ENCODE measurements at regions of chr20 and their contacts with region 1.

Region 1: GRCh38 chr20:22617160-22617559 is 32.8 kb upstream of the FOXA2 start:
- DNase-seq: no peak
- H3K4me3 ChIP-seq: no peak overlapping the region
- H3K27ac ChIP-seq: no peak overlapping the region
- H3K4me1 ChIP-seq: no peaks in the 10 kb centered on the region
- H3K27me3 ChIP-seq: peaks cover 0 to 34% (median 0%) of the 10 kb centered on the region in 4 donors
- CTCF ChIP-seq: no peak
- POLR2A ChIP-seq: no peak

Region 2: DNA sequence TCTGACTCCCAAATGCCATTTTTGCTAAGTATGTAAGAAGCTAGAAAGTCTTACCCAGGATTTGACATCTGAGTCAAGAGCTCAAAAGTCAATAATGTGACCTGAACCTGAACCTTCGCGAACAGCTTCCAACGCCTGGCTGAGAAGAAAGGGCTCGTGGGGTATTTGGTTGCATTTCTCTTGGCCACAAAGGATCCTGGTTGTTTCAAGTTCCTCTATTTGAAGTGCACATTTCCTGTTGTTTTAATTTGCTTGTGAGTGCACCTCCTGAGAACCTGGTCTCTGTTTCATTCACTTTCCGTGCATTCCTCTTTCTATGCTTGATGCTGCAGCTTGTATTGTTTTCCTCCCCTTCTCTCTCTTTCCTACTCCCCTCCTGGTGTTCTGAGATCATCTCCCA is 245.3 kb before region 1 on chr20:
- intact Hi-C with region 1: loop called (anchors 10 kb)
- DNase-seq: no peak
- H3K4me3 ChIP-seq: no peak overlapping the region
- H3K27ac ChIP-seq: no peak overlapping the region
- H3K4me1 ChIP-seq: no peaks in the 10 kb centered on the region
- H3K27me3 ChIP-seq: peaks cover 0 to 61% (median 0%) of the 10 kb centered on the region in 4 donors
- CTCF ChIP-seq: no peak
- POLR2A ChIP-seq: no peak

Region 3: GRCh38 chr20:22453239-22454080 is 163.7 kb before region 1 on chr20:
- intact Hi-C with region 1: no loop called
- DNase-seq: no peak
- H3K4me3 ChIP-seq: no peak overlapping the region
- H3K27ac ChIP-seq: no peak overlapping the region
- H3K4me1 ChIP-seq: peaks cover 6 to 21% (median 6%) of the 10 kb centered on the region in 3 donors
- H3K27me3 ChIP-seq: peaks cover 0 to 63% (median 0%) of the 10 kb centered on the region in 4 donors
- CTCF ChIP-seq: peak; percentile 16 to 60 (median 52)
- POLR2A ChIP-seq: no peak

Region 4: GRCh38 chr20:22575087-22575721 is 42.0 kb before region 1 on chr20:
- intact Hi-C with region 1: no loop called
- DNase-seq: no peak
- H3K4me3 ChIP-seq: no peak overlapping the region
- H3K27ac ChIP-seq: no peak overlapping the region
- H3K4me1 ChIP-seq: peaks cover 0 to 21% (median 5%) of the 10 kb centered on the region in 3 donors
- H3K27me3 ChIP-seq: peaks cover 12 to 100% (median 28%) of the 10 kb centered on the region in 4 donors
- CTCF ChIP-seq: no peak
- POLR2A ChIP-seq: no peak